ENCODE measurements at regions of chr4 and their contacts with region 1.

Region 1: DNA sequence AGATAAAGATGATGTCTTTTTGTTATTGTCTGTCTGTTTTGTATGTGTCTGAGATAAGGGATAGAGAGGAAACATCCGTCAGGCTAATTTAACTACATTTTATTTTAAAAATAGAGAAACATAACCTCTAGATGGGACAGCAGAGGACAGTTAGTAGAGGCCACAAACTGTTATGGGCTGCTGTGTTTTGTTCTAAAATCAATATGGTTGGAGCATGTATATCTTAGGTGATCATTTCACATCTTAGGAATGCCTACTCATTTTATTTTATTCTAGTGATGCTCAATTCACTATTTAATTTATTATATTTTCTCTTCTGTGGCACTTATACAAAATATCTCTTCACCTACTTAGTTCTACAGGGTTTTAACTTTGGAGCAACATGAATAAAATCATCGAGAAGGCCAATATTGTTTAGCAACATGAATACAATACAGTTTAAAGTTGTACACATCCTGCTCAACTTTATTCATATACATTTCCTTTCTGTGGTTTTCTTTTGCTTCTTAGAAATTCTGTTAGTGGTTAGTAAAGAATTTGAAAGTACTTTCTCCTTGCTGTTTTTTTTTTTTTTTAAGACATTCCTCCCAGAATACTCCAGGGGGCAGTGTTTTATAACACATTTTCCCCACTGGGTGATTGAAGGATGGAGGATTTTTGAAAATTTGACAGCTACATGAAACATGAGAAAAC is 392.9 kb downstream of the UNC5C start:
- DNase-seq: peak; percentile 29
- ATAC-seq: peak; percentile 87
- H3K4me3 Mint-ChIP-seq: peak overlapping the region; percentile 61
- H3K27ac Mint-ChIP-seq: peak overlapping the region; percentile 92
- H3K4me1 Mint-ChIP-seq: peaks cover 32% of the 10 kb centered on the region
- H3K27me3 Mint-ChIP-seq: peaks cover 5% of the 10 kb centered on the region

Region 2: GRCh38 chr4:94957030-94957429 is 198.9 kb before region 1 on chr4:
- CTCF ChIA-PET with region 1: no interaction called
- POLR2A ChIA-PET with region 1: no interaction called
- DNase-seq: no peak
- ATAC-seq: no peak
- H3K4me3 Mint-ChIP-seq: no peak overlapping the region
- H3K27ac Mint-ChIP-seq: no peak overlapping the region
- H3K4me1 Mint-ChIP-seq: no peaks in the 10 kb centered on the region
- H3K27me3 Mint-ChIP-seq: no peaks in the 10 kb centered on the region

Region 3: GRCh38 chr4:95049551-95050233 is 106.2 kb before region 1 on chr4:
- CTCF ChIA-PET with region 1: no interaction called
- POLR2A ChIA-PET with region 1: no interaction called
- DNase-seq: no peak
- ATAC-seq: no peak
- H3K4me3 Mint-ChIP-seq: no peak overlapping the region
- H3K27ac Mint-ChIP-seq: no peak overlapping the region
- H3K4me1 Mint-ChIP-seq: no peaks in the 10 kb centered on the region
- H3K27me3 Mint-ChIP-seq: peaks cover 2% of the 10 kb centered on the region

Region 4: GRCh38 chr4:95114521-95114920 is 41.4 kb before region 1 on chr4:
- CTCF ChIA-PET with region 1: no interaction called
- POLR2A ChIA-PET with region 1: no interaction called
- DNase-seq: no peak
- ATAC-seq: no peak
- H3K4me3 Mint-ChIP-seq: no peak overlapping the region
- H3K27ac Mint-ChIP-seq: no peak overlapping the region
- H3K4me1 Mint-ChIP-seq: no peaks in the 10 kb centered on the region
- H3K27me3 Mint-ChIP-seq: peaks cover 5% of the 10 kb centered on the region

Region 5: GRCh38 chr4:95165926-95166524 is 10.1 kb after region 1 on chr4:
- CTCF ChIA-PET with region 1: interaction called, 35 read pairs
- POLR2A ChIA-PET with region 1: no interaction called
- DNase-seq: peak; percentile 67
- ATAC-seq: peak; percentile 80
- H3K4me3 Mint-ChIP-seq: no peak overlapping the region
- H3K27ac Mint-ChIP-seq: no peak overlapping the region
- H3K4me1 Mint-ChIP-seq: no peaks in the 10 kb centered on the region
- H3K27me3 Mint-ChIP-seq: peaks cover 3% of the 10 kb centered on the region

Region 6: GRCh38 chr4:95272797-95273196 is 116.9 kb after region 1 on chr4:
- CTCF ChIA-PET with region 1: no interaction called
- POLR2A ChIA-PET with region 1: no interaction called
- DNase-seq: no peak
- ATAC-seq: no peak
- H3K4me3 Mint-ChIP-seq: no peak overlapping the region
- H3K27ac Mint-ChIP-seq: no peak overlapping the region
- H3K4me1 Mint-ChIP-seq: no peaks in the 10 kb centered on the region
- H3K27me3 Mint-ChIP-seq: no peaks in the 10 kb centered on the region

Measured in activated CD8-positive, alpha-beta T cell treated with anti-CD3 and anti-CD28 coated beads, Interleukin-2, amount 10 ng/mL, durations not matched to agents 7 days and 5 days (primary cell).